ENCODE measurements at regions of chr2 and their contacts with region 1.

Region 1: GRCh38 chr2:152175458-152176325 is at the start of gene STAM2:
- DNase-seq: peak; percentile 89 to 92
- H3K4me3 ChIP-seq: peak within 1 kb of the TSS; percentile 37 to 93 (median 65)
- H3K27ac ChIP-seq: peak within 1 kb of the TSS; percentile 96 to 97 (median 97)
- H3K4me1 ChIP-seq: peaks cover 18 to 24% of the 10 kb centered on the region in 2 donors
- H3K27me3 ChIP-seq: no peaks in the 10 kb centered on the region
- CTCF ChIP-seq: peak; percentile 80 to 96 (median 90)
- POLR2A ChIP-seq: peak; percentile 21 to 64
- total RNA-seq, gene STAM2: 62.1 to 70.6 (median 63.4) TPM

Region 2: DNA sequence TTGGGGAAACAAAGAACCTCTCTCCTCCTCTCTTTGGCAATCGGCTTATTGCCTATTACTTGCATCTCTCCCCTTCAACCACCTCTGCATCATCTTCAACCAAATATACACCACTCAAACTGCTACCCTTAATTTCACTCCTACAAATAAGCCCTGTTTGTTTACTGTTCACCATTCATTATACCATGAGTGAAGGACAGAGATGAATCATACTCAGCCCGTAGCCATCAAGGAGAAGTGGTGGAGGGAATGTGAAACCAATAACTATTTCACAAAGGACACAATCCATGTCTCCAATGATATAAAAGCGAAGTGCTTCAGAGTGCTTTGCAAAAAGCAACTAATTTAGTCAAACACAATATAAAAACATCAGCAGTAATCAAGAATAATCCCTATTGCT is 153.6 kb before region 1 on chr2:
- intact Hi-C with region 1: no loop called
- DNase-seq: no peak
- H3K4me3 ChIP-seq: no peak overlapping the region
- H3K27ac ChIP-seq: no peak overlapping the region
- H3K4me1 ChIP-seq: no peaks in the 10 kb centered on the region
- H3K27me3 ChIP-seq: no peaks in the 10 kb centered on the region
- CTCF ChIP-seq: no peak
- POLR2A ChIP-seq: no peak

Region 3: DNA sequence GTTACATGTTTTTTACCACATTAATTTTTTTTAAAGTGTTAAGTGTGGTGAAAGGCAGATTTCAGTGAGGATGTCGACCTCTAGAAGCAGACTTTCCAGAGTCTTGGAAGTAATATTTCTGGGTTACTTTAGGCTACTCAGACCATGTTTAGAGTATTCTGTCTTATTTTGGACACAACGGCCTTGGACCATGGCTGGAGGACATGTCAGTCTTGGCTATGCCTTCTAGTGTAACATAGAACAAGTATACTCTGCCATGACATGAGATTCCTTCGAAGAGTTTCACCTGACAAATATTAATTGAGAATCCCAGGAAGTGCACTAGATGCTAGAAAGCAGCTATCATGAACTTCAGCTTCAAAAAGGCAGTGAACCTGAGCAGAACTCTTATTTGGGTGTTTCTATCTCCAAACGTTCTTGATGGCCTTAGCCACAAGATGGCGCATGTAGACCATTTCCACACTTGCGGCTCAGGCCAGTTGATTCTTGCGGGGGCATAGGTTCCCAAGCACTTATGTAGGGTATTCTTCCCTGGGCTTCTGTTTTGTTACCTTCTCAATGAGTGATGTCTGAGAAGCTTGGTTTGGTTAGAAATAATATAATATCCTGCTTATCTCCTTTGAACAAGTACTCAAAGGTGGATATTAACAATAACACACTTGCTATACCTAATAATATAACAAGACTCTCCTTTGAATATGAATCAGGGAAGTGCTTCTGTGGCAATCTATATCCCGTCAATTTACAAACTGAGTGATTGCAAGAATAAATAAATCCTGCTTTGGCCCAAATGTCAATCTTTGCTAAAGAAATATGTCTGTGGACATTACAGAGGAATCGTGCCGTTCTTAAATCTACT is 138.9 kb before region 1 on chr2:
- intact Hi-C with region 1: loop called (anchors 10 kb)
- DNase-seq: peak; percentile 60 to 66
- H3K4me3 ChIP-seq: no peak overlapping the region
- H3K27ac ChIP-seq: no peak overlapping the region
- H3K4me1 ChIP-seq: peaks cover 0 to 6% of the 10 kb centered on the region in 2 donors
- H3K27me3 ChIP-seq: no peaks in the 10 kb centered on the region
- CTCF ChIP-seq: peak; percentile 46 to 74 (median 64)
- POLR2A ChIP-seq: no peak

Region 4: GRCh38 chr2:152717228-152718075 is 541.8 kb after region 1 on chr2 and contains the start of gene PRPF40A:
- intact Hi-C with region 1: loop called (anchors 10 kb)
- DNase-seq: peak; percentile 99
- H3K4me3 ChIP-seq: peak within 1 kb of the TSS; percentile 72 to 94 (median 85)
- H3K27ac ChIP-seq: peak within 1 kb of the TSS; percentile 92 to 98 (median 98)
- H3K4me1 ChIP-seq: peaks cover 11 to 16% of the 10 kb centered on the region in 2 donors
- H3K27me3 ChIP-seq: no peaks in the 10 kb centered on the region
- CTCF ChIP-seq: no peak
- POLR2A ChIP-seq: peak; percentile 65 to 89
- total RNA-seq, gene PRPF40A: 86.8 to 147 (median 102) TPM